A673 (cell line): ENCODE measurements at regions of chr7 and their contacts with region 1.

Region 1: DNA sequence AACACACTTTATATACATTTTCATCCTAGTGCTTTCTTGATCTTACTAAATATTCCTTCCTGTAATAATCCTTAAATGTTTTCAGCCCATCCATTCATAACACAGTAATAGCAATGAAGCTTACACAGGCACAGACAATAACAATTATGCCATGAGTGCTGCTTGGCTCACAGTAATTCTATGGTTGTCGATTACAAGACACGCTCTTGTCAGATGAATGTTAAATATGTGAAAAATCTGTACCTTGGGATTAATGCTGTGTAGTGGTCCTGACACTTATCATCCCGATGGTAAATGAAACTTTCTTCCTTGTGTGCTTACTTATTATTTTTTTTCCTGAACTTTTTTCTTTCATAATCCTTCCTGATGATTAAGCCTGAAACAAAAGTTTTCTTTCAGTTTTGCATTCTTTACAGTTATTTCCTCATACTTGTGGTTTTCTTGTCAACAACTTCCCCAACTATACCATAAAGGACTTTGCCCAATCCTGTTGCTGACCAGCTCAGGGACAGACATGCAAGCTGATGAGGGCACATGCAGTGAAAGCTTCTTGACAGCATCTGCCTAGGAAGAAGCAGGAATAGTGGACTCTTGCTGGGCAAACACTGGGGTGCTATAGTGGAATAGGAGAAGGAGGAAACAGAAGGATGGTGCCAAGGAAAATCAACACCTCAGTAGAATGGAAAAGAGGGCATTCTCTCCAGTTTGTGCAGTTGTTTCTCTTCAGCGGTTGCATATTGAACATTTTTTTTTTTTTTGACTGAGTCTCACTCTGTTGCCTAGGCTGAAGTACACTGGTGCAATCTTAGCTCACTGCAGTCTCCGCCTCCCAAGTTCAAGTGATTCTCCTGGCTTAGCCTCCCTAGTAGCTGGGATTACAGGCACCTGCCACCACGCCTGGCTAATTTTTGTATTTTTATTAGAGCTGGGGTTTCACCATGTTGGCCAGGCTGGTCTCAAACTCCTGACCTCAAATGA is 6.7 kb upstream of the MGAM2 start:
- DNase-seq: no peak
- H3K4me3 ChIP-seq: no peak overlapping the region
- H3K27ac ChIP-seq: no peak overlapping the region
- H3K4me1 ChIP-seq: no peaks in the 10 kb centered on the region
- H3K27me3 ChIP-seq: peaks cover 4% of the 10 kb centered on the region
- CTCF ChIP-seq: no peak

Region 2: DNA sequence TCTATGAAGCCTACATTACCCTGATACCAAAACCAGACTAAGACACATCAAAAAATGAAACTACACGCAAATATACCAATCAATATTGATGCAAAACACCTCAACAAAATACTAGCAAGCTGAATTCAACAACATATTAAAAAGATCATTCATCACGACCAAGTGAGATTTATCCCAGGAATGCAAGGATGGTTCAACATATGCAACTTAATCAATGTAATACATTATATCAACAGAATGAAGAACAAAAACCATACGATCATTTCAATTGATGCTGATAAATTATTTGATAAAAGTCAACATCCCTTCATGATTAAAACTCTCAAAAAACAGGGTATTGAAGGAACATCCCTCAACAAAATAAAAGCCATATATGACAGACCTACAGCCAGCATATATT is 163.8 kb before region 1 on chr7:
- CTCF ChIA-PET with region 1: no interaction called
- POLR2A ChIA-PET with region 1: no interaction called
- intact Hi-C with region 1: no loop called
- DNase-seq: no peak
- H3K4me3 ChIP-seq: no peak overlapping the region
- H3K27ac ChIP-seq: no peak overlapping the region
- H3K4me1 ChIP-seq: no peaks in the 10 kb centered on the region
- H3K27me3 ChIP-seq: no peaks in the 10 kb centered on the region
- CTCF ChIP-seq: no peak

Region 3: DNA sequence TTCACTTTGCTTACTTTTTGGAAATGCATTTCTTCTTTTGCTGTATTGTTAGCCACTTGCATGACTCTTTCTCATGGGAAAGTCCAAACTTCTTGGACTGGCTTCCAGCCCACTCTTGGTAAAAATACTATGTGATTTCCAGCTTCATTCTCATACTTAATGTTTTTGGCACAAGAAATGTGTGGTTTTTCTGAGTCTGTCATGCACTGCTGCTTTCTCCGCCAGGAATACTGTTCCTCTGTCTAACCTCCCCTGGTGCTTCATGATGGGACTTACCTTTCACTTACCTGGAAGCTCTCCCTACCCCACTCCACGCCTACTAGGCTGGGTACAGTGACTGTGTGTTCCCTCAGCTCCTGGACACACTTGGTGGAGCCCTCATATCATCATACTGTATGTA is 25.4 kb after region 1 on chr7:
- CTCF ChIA-PET with region 1: no interaction called
- POLR2A ChIA-PET with region 1: no interaction called
- intact Hi-C with region 1: loop called (anchors 2 kb)
- DNase-seq: no peak
- H3K4me3 ChIP-seq: no peak overlapping the region
- H3K27ac ChIP-seq: no peak overlapping the region
- H3K4me1 ChIP-seq: no peaks in the 10 kb centered on the region
- H3K27me3 ChIP-seq: no peaks in the 10 kb centered on the region
- CTCF ChIP-seq: no peak